ENCODE measurements at regions of chr11 and their contacts with region 1.

Region 1: DNA sequence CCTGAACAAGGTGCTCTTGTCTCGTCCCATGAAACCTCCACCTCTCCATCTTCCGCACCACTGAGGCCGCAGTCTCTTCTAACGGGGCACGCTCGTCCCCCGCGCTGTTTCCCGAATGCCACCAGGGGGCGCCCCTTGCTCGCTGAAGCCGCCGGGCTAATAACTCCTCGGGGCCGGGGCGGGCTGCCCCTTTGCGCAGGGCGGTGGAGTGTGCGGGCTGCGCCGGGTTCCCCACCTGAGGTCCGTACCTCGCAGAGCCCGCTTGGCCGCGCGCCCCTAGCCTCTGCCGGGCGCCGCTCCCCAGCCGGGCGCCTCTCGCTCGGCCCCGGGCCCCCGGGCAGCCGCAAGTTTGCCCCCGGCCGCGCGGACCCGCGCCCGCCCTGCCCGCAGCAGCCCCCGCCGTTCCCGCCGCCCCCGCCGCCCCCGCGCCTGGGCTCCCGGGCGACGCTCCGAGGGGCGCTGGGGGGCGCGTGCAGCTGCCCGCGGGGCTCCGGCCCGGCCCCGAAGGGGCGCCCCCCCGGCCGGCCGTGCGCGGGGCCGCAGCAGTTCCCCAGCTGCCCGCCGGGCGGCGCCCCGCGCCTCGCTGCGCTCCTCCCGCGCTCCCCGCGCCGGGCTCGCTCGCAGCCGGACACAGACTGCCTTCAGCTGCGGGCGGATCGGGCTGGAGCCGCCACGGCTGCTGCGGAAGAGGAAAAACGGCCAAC is at the start of gene GRIK4:
- DNase-seq: peak; percentile 97
- CTCF ChIP-seq: peak; percentile 92

Region 2: DNA sequence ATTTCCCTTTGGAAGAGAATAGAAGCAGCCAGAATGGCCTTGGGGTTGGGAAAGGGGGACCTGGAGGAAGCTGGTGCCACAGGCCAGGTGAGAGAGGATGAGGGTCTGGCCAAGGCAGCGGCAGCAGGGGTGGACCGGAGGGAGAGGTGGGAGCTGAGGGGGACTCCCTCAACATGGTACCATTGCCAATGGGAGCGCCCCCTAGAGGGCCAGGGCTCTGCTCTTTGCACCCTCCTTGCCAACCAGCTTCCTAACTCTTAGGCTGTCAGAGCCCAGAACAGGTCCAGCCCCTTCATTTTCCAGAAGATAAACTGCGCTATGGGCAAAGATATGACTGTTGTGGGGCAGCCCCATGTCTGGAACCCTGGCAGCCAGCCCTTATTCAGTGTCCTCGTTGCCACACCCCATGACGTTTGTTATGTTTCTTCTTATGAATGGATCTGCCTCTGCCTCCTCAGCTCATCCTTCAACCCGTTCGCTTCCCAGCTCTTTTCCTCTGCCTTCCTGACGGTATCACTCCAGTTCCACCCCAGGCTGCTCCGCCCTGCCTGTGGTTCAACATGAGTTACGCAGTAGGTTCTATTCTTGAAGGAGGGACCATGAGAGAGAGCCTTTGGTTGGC is 185.4 kb after region 1 on chr11:
- in situ Hi-C with region 1: loop called (anchors 25 kb)
- DNase-seq: no peak
- CTCF ChIP-seq: peak; percentile 40

Region 3: DNA sequence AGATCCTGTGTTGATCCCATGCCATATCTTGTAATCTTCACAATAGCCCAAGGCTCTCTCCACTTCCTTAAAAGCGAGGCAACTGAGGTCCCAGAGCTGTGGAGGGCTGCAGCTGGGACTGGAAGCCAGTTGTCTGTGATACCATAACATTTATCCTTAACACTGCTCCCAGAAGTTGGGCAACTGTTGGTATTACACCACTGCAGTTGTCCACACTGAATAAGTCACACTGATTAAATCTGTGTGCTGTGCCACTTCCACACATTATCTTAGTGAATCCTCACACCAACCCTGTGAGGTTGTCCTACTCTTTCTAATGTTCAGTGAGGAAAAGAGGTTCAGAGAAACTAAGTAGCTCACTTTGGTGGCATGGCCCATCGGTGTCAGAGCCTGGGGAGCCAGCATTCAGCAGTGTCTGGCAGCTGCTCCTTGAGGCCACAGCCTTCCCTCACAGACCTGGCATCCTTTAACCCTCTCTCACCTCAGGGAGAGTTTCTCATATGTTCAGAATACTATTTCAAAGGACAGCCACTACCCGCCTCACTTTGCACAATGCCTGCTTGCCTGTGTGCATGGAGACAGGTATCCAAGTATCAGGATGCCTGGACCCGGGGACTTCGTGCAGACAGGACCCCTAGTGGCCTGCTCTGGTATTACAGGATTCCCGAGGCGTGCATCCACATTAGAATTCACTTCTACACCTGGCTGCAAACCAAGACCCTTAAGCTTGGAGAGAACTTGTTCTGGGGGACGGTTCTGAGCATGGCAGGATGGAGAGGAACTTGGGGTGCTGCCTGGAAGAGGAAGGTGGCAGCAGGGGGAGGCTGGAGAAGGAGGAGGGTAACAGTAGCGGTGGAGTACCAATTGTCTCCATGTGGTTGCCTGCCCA is 290.8 kb after region 1 on chr11:
- in situ Hi-C with region 1: loop called (anchors 25 kb)
- DNase-seq: peak; percentile 76
- CTCF ChIP-seq: peak; percentile 83

Region 4: GRCh38 chr11:120929664-120930154 is 418.4 kb after region 1 on chr11:
- in situ Hi-C with region 1: loop called (anchors 25 kb)
- DNase-seq: peak; percentile 70
- CTCF ChIP-seq: peak; percentile 75

Region 5: GRCh38 chr11:121194731-121195596 is 683.7 kb after region 1 on chr11:
- in situ Hi-C with region 1: loop called (anchors 25 kb)
- DNase-seq: peak; percentile 72
- CTCF ChIP-seq: peak; percentile 80